ENCODE measurements at regions of chr2 and their contacts with region 1.

Region 1: GRCh38 chr2:55175254-55176025 is 56.7 kb downstream of the CLHC1 start:
- H3K4me3 ChIP-seq: no peak overlapping the region
- H3K27ac ChIP-seq: no peak overlapping the region
- H3K4me1 ChIP-seq: no peaks in the 10 kb centered on the region
- CTCF ChIP-seq: no peak

Region 2: DNA sequence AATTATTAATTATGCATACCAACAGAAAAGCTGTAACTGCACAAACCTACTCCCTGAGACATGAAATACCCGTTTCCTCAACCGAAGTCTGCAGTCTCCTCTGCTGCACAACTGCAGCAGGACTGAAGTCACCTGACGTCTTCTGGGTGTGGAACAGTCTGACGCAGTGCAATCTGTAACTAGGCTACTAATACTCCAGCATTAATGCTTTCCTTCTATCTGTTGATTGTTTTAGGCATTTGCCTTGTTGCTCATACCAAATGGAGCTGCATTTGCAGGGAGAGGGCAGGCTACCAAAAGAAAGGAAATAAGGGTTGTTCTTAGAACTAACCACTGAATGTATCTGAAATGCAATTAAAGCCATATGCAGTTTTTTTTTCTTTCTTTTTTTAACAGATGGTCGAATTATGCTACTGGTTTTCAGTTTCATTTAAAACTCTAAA is 165.3 kb before region 1 on chr2:
- CTCF ChIA-PET with region 1: interaction called, 121 read pairs
- POLR2A ChIA-PET with region 1: no interaction called
- H3K4me3 ChIP-seq: peak overlapping the region; percentile 14; the same call in 1 of the 2 replicates
- H3K27ac ChIP-seq: no peak overlapping the region
- H3K4me1 ChIP-seq: peaks cover 32% of the 10 kb centered on the region
- CTCF ChIP-seq: no peak

Region 3: DNA sequence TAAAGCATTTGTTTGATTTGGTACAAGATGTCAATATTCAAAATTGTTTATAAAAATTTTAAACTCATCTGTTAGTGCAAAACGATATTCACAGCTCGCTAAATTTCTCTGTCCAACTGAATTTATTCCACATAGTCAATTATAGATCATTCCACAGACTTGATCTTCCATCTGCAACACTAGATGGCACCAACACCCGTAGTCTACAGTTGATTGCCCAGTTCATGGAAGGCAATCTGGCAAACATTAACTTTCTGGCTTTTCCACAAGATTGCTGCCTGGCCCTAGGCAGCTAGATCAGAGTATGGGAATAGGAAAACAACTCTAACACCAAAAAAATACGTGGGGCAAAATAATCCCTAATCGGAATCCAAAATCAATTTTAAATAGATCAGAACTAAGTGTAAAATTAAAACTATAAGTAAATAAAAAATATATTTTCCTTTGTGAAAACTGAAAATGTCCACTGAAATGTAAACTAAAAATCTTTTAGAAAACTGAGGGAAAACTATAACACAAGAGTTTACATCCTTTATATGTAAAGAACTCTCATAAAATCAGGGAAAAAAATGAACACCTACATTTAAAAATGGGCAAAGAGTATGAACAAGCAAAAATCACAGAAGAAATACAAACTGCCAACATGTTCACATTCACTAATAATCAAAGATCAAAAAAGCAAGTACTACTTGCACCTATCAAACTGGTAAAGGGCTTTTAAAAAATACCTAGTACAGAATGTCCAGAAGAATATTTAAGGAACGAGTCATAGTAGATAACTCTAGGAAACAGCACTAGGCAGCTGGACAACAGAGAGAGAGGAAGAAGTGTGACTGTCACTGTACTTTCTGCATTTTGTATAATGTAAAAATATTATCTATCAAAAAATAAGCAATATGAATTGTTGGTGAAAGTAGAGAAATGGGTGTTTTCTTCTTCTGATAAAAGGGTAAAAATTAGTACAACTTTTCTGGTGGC is 160.2 kb before region 1 on chr2:
- CTCF ChIA-PET with region 1: interaction called, 121 read pairs
- POLR2A ChIA-PET with region 1: no interaction called
- H3K4me3 ChIP-seq: no peak overlapping the region
- H3K27ac ChIP-seq: no peak overlapping the region
- H3K4me1 ChIP-seq: peaks cover 24% of the 10 kb centered on the region
- CTCF ChIP-seq: peak; percentile 33; the same call in 1 of the 2 replicates

Region 4: GRCh38 chr2:55239656-55240222 is 64.3 kb after region 1 on chr2:
- CTCF ChIA-PET with region 1: no interaction called
- POLR2A ChIA-PET with region 1: no interaction called
- H3K4me3 ChIP-seq: no peak overlapping the region
- H3K27ac ChIP-seq: no peak overlapping the region
- H3K4me1 ChIP-seq: no peaks in the 10 kb centered on the region
- CTCF ChIP-seq: no peak

Region 5: DNA sequence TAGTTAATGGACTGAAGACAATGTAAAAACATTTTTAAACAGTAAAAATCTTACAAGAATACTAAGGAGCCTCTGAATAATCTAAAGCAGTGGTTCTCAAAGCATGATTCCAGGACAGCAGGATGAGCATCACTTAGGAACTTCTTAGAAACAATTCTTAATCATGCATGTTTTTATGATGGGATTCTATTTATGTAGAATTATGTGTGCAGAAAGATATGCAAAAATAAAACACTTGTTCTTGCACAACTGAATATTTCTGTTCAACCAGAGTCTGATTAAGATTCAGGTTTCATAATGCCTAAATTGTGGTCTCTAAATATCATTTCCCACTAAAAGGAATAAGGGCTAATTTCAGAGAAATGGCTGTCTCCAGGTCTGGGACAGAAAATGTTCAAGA is 162.8 kb after region 1 on chr2:
- CTCF ChIA-PET with region 1: no interaction called
- POLR2A ChIA-PET with region 1: no interaction called
- H3K4me3 ChIP-seq: no peak overlapping the region
- H3K27ac ChIP-seq: no peak overlapping the region
- H3K4me1 ChIP-seq: no peaks in the 10 kb centered on the region
- CTCF ChIP-seq: no peak

Region 6: GRCh38 chr2:55384786-55385185 is 209.3 kb after region 1 on chr2:
- CTCF ChIA-PET with region 1: no interaction called
- POLR2A ChIA-PET with region 1: no interaction called
- H3K4me3 ChIP-seq: no peak overlapping the region
- H3K27ac ChIP-seq: no peak overlapping the region
- H3K4me1 ChIP-seq: no peaks in the 10 kb centered on the region
- CTCF ChIP-seq: no peak

Measured in HEK293 (cell line).